ENCODE measurements at regions of chr9 and their contacts with region 1.

Region 1: DNA sequence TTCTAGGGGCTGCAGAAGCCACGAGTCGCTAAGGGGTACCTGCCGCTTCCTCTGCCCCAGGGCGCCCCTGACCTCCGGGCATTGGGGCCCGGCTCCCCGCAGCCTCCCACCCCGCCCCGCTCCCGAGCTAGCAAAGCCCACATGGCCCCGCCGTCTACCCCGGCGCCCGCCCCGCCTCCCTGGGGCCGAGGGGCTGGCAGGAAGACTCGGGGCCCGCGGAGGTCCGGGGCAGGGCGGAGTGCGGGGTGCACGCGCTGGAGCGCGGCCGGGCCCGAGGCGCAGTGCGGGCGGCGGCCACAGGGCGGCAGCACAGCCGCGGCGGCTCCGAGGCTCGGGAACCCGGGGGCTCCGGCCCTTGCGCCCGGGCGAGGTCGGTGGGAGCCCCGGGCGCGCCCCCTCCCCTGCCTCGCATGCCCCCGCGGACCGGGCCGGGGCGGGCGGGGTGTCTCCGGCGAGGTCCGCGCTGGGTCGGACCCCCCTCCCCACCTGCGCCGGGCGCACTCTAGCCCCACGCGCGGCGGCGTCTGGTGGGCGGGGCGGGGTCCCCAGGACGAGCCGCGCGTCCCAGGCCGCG is 6.7 kb downstream of the NRARP start:
- DNase-seq: no peak
- ATAC-seq: peak; percentile 76
- H3K4me3 ChIP-seq: peak overlapping the region; percentile 42 to 51; a peak in 3 of 4 replicates
- H3K27ac ChIP-seq: peak overlapping the region; percentile 34; the same call in 1 of the 2 replicates
- H3K4me1 ChIP-seq: peaks cover 28 to 57% of the 10 kb centered on the region in 2 experiments
- H3K27me3 ChIP-seq: no peaks in the 10 kb centered on the region
- CTCF ChIP-seq: peak in 2 of 3 experiments; percentile 25 to 36; a peak in 1 of 6 replicates
- POLR2A ChIP-seq: no peak
- RAD21 ChIP-seq: no peak

Region 2: GRCh38 chr9:137445275-137445807 is 150.0 kb after region 1 on chr9:
- CTCF ChIA-PET with region 1: no interaction called
- POLR2A ChIA-PET with region 1: no interaction called
- RAD21 ChIA-PET with region 1: no interaction called
- intact Hi-C with region 1: loop called (anchors 2 kb)
- DNase-seq: peak; percentile 56
- ATAC-seq: peak; percentile 65
- H3K4me3 ChIP-seq: peak overlapping the region; percentile 4 to 17; a peak in 1 of 4 replicates
- H3K27ac ChIP-seq: no peak overlapping the region; the same call in 1 of the 2 replicates
- H3K4me1 ChIP-seq: peaks cover 16 to 33% of the 10 kb centered on the region in 2 experiments
- H3K27me3 ChIP-seq: no peaks in the 10 kb centered on the region
- CTCF ChIP-seq: peak; percentile 77 to 93 (median 88)
- POLR2A ChIP-seq: no peak
- RAD21 ChIP-seq: peak; percentile 84